Endothelial cell of umbilical vein (primary cell): ENCODE measurements at regions of chr12 and their contacts with region 1.

Region 1: DNA sequence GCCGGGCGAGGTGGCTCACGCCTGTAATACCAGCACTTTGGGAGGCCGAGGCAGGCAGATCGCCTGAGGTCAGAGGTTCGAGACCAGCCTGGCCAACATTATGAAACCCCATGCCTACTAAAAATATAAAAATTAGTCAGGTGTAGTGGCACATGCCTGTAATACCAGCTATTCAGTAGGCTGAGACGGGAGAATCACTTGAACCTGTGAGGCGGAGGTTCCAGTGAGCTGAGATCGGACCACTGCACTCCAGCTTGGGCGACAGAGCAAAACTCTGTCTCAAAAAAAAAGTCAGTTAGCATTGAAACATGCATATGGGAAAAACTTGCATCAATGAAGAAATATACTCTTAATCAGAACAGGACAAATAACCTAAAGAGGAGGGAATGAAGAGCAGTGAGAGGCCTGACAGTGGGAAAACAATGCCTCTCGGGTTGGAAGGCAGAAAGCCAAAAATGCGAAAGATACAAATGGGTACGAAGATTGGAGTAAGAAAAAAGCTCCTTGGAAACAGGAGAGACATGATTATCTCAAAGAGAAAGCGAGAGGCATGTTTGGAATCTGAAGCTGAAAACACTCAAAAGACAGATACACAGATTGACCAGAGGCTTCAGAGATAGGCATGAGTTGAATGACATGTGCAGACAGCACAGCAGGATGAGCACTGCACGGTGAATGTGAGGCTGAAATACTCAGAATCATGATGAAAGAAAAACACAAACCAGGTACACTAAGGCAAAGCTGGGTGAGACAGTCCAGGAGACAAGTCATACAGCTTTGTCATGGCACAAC is 30.6 kb downstream of the RESF1 start:
- DNase-seq: no peak
- H3K4me3 ChIP-seq: no peak overlapping the region
- H3K27ac ChIP-seq: no peak overlapping the region
- H3K4me1 ChIP-seq: no peaks in the 10 kb centered on the region
- H3K27me3 ChIP-seq: no peaks in the 10 kb centered on the region
- CTCF ChIP-seq: no peak
- POLR2A ChIP-seq: no peak

Region 2: DNA sequence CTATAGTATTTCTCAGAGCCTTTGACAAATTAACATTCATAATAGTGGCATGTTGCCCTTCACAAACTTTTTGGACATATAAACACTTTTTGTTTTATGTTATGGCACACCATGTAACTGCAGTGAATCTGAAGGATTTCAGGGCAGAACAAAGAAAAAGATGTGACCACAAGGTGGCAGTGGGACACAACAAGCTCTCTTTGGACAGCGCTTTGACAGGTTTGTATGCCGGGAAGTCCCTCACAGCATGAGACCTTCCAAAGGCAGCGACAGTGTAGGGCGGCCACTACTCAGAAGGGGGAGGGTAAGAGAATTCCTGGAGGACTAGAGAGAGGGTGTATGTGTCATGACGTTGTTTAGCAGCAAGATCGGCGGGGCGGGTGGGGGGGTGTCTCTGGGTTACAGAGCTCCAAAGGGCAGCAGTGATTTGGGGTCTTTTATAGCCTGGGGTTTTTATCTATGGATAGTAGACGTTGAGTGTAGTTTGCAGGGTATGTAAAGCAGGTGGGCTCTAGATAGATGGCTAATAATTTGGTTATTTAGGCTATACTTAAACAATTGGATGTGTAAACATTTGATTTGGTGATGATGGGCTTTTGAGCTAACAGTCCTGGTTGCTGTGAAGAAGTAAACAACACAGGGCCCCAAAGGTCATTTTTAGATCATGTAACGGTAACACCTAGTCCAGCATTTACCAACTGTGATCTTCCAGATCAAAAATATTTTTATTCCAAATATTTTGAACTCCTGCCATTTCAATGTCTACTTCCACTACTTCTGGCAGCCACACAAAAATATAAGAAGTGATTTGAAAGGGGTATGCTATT is 307.4 kb before region 1 on chr12:
- CTCF ChIA-PET with region 1: interaction called, 3 read pairs
- POLR2A ChIA-PET with region 1: no interaction called
- dilution Hi-C with region 1: no loop called
- intact Hi-C with region 1: loop called (anchors 5 kb)
- DNase-seq: peak; percentile 87
- H3K4me3 ChIP-seq: no peak overlapping the region
- H3K27ac ChIP-seq: no peak overlapping the region
- H3K4me1 ChIP-seq: no peaks in the 10 kb centered on the region
- H3K27me3 ChIP-seq: no peaks in the 10 kb centered on the region
- CTCF ChIP-seq: peak; percentile 69 to 71
- POLR2A ChIP-seq: no peak

Region 3: DNA sequence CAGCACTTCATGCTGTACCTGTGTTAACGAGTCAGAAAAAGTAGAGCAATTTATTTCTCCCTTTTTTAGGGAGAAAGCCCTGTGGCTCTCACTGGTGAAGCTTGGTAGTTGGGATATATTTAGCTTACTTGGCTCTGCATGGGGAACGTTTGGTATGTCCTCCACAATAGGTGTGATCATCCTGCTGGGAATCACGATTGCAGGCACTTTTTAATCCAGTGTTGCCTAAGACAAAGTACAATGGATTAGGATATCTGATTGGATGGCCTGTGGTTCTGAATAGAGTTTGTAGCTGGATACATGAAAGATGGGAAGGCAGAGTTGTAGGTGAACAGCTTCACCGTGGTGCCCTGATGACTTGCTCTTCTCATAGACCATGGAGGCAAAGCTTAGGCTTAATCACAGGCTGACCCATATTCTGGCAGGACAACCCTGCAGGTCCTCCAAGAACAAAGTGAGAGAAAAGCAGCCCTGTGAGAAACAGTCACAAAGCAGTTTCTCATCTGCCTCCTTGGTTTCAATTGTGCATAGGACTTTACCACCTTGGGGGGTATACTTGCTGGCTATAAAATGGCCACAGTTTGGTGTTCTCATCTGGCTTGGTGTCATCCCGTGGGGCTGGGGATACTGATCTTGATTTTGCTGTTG is 23.1 kb before region 1 on chr12:
- CTCF ChIA-PET with region 1: no interaction called
- POLR2A ChIA-PET with region 1: no interaction called
- dilution Hi-C with region 1: no loop called
- intact Hi-C with region 1: no loop called
- DNase-seq: peak; percentile 7
- H3K4me3 ChIP-seq: no peak overlapping the region
- H3K27ac ChIP-seq: no peak overlapping the region
- H3K4me1 ChIP-seq: peaks cover under 1% of the 10 kb centered on the region
- H3K27me3 ChIP-seq: no peaks in the 10 kb centered on the region
- CTCF ChIP-seq: no peak
- POLR2A ChIP-seq: peak; percentile 17

Region 4: DNA sequence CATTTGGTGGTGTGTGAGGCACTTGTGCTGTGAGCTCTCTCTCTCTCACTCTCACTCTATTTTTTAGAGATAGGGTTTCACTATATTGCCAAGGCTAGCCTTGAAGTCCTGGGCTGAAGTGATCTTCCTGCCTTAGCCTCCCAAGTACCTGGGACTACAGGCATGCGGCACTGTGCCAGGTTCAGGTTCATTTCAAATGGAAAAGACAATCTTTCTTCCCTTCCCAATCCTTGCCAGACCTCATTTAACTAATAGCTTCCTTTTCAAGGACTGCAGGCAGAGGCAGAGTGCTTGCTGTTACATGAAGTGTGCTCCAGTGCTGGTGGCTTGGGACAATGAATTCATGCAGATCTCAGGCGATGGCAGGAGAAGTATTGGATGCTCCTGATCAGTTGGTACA is 43.6 kb after region 1 on chr12:
- CTCF ChIA-PET with region 1: no interaction called
- POLR2A ChIA-PET with region 1: no interaction called
- dilution Hi-C with region 1: no loop called
- intact Hi-C with region 1: no loop called
- DNase-seq: peak; percentile 55
- H3K4me3 ChIP-seq: no peak overlapping the region
- H3K27ac ChIP-seq: no peak overlapping the region
- H3K4me1 ChIP-seq: peaks cover 33% of the 10 kb centered on the region
- H3K27me3 ChIP-seq: no peaks in the 10 kb centered on the region
- CTCF ChIP-seq: no peak
- POLR2A ChIP-seq: no peak